ENCODE measurements at regions of chr11 and their contacts with region 1.

Region 1: GRCh38 chr11:130465263-130465662 is 16.8 kb downstream of the ADAMTS15 start:
- DNase-seq: no peak
- ATAC-seq: no peak
- H3K4me3 ChIP-seq: no peak overlapping the region
- H3K27ac ChIP-seq: no peak overlapping the region
- H3K4me1 ChIP-seq: no peaks in the 10 kb centered on the region
- H3K27me3 ChIP-seq: no peaks in the 10 kb centered on the region
- CTCF ChIP-seq: no peak

Region 2: DNA sequence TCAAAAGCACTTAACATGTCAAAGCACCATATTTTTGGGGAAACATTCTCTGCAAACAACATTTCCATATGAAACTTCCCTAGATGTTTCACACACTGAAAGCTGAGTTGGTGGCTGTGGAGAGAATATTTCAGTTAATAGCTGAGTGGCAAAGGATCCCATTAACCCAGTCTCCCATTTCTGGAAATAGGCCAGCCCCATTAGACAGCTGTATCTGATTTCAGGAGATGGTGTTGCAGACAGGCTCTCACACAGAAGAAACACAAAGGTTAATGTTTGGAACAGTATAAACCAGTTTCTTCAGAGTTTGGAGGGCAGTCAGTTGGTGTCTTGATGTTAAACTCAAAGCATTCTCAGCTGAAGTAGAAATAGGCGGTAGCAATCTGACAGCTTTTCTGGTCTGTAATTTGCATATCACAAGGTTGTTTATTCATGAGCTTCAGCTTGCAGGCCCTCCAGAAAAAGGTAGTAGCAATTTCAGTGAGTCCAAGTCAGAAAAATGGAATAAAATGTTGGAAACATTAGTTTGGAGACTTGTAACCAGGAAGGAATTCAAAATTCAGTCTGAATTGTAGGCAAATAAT is 135.1 kb before region 1 on chr11:
- CTCF ChIA-PET with region 1: no interaction called
- POLR2A ChIA-PET with region 1: interaction called, 13 read pairs
- in situ Hi-C with region 1: no loop called
- intact Hi-C with region 1: no loop called
- DNase-seq: no peak
- ATAC-seq: no peak
- H3K4me3 ChIP-seq: no peak overlapping the region
- H3K27ac ChIP-seq: no peak overlapping the region
- H3K4me1 ChIP-seq: no peaks in the 10 kb centered on the region
- H3K27me3 ChIP-seq: no peaks in the 10 kb centered on the region
- CTCF ChIP-seq: no peak

Region 3: DNA sequence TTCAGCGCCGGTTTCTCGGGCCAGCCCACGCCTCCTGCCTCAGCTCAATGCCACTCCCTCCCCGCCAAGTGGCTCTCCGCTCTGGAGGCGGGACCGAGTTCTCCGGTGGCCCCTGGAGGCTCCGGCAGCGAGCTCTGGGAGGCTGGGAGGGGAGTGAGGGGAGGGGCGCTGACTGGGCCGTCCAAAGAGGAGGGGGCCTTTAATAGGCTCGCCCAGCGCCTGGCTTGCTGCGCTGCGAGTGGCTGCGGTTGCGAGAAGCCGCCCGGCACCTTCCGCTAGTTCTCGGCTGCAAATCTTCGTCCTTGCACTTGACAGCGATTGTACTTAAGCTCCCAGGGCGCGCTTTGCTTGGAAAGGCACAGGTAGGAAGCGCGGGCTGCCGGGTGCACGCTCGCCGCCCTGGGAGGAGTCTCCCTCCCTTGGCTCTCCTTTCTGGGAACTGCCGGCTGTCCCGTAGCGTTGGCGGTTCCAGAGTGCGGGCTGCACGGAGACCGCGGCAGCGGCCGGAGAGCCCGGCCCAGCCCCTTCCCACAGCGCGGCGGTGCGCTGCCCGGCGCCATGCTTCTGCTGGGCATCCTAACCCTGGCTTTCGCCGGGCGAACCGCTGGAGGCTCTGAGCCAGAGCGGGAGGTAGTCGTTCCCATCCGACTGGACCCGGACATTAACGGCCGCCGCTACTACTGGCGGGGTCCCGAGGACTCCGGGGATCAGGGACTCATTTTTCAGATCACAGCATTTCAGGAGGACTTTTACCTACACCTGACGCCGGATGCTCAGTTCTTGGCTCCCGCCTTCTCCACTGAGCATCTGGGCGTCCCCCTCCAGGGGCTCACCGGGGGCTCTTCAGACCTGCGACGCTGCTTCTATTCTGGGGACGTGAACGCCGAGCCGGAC is 16.6 kb before region 1 on chr11 and contains the start of gene ADAMTS15:
- CTCF ChIA-PET with region 1: no interaction called
- POLR2A ChIA-PET with region 1: interaction called, 10 read pairs
- in situ Hi-C with region 1: no loop called
- intact Hi-C with region 1: no loop called
- DNase-seq: no peak
- ATAC-seq: peak; percentile 95
- H3K4me3 ChIP-seq: peak within 1 kb of the TSS; percentile 73 to 89
- H3K27ac ChIP-seq: peak within 1 kb of the TSS; percentile 67
- H3K4me1 ChIP-seq: peaks cover 16% of the 10 kb centered on the region
- H3K27me3 ChIP-seq: no peaks in the 10 kb centered on the region
- CTCF ChIP-seq: no peak
- total RNA-seq, gene ADAMTS15: 39.9 TPM

Region 4: DNA sequence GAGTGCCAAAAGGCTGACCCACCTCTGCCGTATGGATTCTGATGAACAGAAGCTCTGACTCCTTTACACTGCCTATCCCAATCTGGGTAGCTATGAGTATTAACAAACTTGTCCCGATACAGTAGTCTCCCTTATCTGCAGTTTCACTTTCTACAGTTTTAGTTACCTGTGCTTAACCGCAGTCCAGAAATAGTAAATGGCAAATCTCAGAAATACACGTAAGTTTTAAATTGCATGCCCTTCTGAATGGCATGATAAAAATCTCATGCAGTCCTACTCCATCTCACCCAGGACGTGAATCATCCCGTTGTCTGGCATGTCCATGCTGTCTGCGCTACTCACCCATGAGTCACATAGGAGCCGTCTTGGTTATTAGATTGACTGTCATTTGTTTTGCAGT is 382.3 kb after region 1 on chr11:
- CTCF ChIA-PET with region 1: no interaction called
- POLR2A ChIA-PET with region 1: no interaction called
- in situ Hi-C with region 1: loop called (anchors 10 kb)
- intact Hi-C with region 1: no loop called
- DNase-seq: peak; percentile 67
- ATAC-seq: peak; percentile 96
- H3K4me3 ChIP-seq: peak overlapping the region in 1 of 2 experiments; percentile 1; a peak in 1 of 4 replicates
- H3K27ac ChIP-seq: peak overlapping the region; percentile 32; the same call in 1 of the 2 replicates
- H3K4me1 ChIP-seq: peaks cover 6% of the 10 kb centered on the region; the same call in 1 of the 2 replicates
- H3K27me3 ChIP-seq: no peaks in the 10 kb centered on the region
- CTCF ChIP-seq: no peak